Body of pancreas (tissue), 4 donors: ENCODE measurements at regions of chr18 and their contacts with region 1.

Region 1: DNA sequence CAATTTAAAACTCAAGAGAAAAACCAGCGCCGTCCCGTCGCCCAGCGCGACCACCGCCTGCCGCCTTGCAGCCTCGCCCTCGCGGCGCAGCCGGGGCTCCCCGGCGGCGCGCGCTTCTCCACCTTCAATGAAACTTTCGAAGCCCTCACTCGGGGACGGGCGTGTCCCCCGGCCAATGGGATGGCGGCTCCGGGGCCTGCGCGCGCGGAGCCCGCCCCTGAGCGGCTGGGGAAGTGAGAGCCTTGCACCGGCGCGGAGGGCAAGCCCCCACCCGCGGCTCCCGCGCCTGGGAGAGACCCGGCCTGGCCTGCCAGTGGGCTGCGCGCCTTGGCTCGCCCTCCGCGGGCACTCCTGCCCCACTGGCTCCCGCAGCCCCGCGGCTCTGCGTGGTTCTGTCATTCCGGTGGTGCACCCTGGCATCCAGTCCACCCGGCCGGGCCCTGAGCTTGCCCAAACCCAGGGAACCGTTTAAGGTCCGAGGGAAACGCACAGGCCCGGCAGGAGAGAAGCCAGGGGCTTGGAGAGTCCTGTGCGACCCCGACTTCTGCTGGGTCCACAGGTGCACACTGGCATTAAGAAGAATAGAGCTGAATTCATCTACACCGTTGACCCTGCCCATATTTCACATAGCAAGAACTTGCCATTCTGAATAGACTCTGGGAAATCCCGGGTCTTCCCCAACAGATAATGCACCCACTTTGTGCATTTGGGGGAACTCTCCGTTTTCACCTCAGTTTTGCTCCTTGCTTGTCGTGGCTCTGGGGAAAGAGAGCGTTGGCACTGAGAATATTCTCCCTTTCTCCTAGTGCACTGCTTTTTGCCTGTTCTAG is at the start of gene PIEZO2:
- DNase-seq: peak; percentile 31 to 55 (median 50)
- ATAC-seq: peak; percentile 73
- H3K4me3 ChIP-seq: peak within 1 kb of the TSS in 1 of 2 donors; percentile 12
- H3K27ac ChIP-seq: no peak within 1 kb of the TSS
- H3K4me1 ChIP-seq: peaks cover 27% of the 10 kb centered on the region
- H3K27me3 ChIP-seq: peaks cover 0 to 26% of the 10 kb centered on the region in 2 donors
- CTCF ChIP-seq: no peak
- POLR2A ChIP-seq: no peak
- total RNA-seq, gene PIEZO2: 0.33 to 40.7 TPM

Region 2: GRCh38 chr18:10560450-10561045 is 589.1 kb before region 1 on chr18:
- intact Hi-C with region 1: loop called (anchors 5 kb)
- DNase-seq: peak; percentile 76 to 86 (median 81)
- ATAC-seq: peak; percentile 79
- H3K4me3 ChIP-seq: no peak overlapping the region
- H3K27ac ChIP-seq: peak overlapping the region in 3 of 4 donors; percentile 4 to 36 (median 10)
- H3K4me1 ChIP-seq: peaks cover 11% of the 10 kb centered on the region
- H3K27me3 ChIP-seq: no peaks in the 10 kb centered on the region
- CTCF ChIP-seq: peak; percentile 76 to 81 (median 76)
- POLR2A ChIP-seq: no peak

Region 3: GRCh38 chr18:10841203-10841602 is 308.5 kb before region 1 on chr18:
- intact Hi-C with region 1: loop called (anchors 10 kb)
- DNase-seq: peak in 1 of 4 donors; percentile 19
- ATAC-seq: no peak
- H3K4me3 ChIP-seq: no peak overlapping the region
- H3K27ac ChIP-seq: no peak overlapping the region
- H3K4me1 ChIP-seq: no peaks in the 10 kb centered on the region
- H3K27me3 ChIP-seq: no peaks in the 10 kb centered on the region
- CTCF ChIP-seq: no peak
- POLR2A ChIP-seq: no peak